GM13977 (cell line): ENCODE measurements at regions of chr5 and their contacts with region 1.

Region 1: DNA sequence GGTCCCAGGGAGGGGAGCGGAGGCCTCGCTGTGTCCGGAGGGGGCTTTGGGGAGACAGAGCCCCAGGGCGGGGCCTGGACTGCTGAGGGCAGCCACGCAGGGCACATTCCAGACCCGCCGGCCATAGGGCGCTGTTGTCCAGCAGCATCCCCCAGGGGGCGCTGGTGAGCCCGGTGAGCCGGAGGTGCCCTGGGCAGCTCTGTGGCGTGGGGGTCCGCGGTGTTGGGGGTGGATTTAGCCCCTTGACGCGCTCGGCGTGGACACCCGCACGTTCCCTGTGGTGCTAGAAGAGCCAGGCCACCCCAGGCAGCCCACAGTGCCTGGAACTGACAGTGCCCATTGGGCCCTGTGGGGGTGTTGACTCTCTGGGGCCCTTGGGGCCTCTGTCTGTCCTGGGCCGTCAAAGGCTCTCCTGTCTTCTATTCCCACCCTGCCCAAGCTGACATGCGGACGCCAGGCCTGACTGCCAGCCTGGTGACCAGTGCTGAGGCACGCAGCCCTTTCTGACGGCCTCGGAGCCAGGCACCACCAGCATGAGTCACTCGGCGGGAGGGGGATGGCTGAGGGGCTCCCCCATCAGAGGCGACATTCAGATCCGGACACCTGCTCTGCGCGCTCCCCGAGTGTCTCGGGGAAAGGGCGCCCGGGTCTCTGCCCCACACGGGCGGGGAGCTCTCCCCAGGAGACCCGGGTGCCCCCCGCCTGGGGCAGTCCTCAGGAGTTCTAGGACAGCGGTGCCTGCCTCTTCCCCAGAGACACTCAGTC is 23.9 kb downstream of the TPPP start:
- DNase-seq: peak; percentile 69
- CTCF ChIP-seq: peak; percentile 75

Region 2: GRCh38 chr5:111171-111570 is 558.1 kb before region 1 on chr5:
- in situ Hi-C with region 1: no loop called
- DNase-seq: no peak
- CTCF ChIP-seq: no peak

Region 3: DNA sequence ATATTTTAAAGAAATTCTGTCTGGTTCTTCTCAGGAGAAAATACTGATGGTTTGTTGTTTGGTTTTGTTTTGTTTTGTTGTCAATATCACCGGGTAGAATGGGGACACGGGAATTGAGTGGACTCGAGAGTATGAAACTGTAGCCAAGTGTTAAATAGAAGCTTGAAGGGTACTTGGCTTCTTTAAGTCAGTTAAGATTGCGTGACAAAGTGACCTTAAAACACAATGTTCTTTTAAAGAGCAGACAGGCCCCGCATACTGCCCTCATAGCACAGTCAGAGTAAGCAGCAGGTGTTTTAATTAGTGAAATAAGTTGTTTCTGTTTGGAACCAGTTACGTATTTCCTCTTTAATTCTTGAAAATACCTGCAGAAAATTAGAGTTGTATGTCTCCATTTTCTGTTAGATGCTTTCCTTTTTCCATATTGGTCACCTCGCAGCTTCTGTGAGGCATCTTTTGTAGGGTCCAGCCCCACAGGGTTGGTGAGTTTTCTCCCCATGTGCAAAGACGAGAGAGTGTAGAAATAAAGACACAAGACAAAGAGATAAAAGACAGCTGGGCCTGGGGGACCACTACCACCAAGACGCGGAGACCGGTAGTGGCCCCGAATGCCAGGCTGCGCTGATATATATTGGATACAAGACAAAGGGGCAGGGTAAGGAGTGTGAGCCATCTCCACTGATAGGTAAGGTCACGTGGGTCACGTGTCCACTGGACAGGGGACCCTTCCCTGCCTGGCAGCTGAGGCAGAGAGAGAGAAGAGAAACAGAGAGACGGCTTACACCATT is 233.0 kb after region 1 on chr5:
- in situ Hi-C with region 1: loop called (anchors 10 kb)
- DNase-seq: no peak
- CTCF ChIP-seq: no peak